Endothelial cell of umbilical vein (primary cell): ENCODE measurements at regions of chr5 and their contacts with region 1.

Region 1: GRCh38 chr5:149035372-149035790 is 27.5 kb downstream of the SH3TC2 start:
- DNase-seq: peak; percentile 73
- H3K4me3 ChIP-seq: no peak overlapping the region
- H3K27ac ChIP-seq: no peak overlapping the region
- H3K4me1 ChIP-seq: peaks cover 39% of the 10 kb centered on the region
- H3K27me3 ChIP-seq: no peaks in the 10 kb centered on the region
- CTCF ChIP-seq: peak; percentile 87 to 88
- POLR2A ChIP-seq: no peak

Region 2: GRCh38 chr5:148740966-148741742 is 294.2 kb before region 1 on chr5:
- CTCF ChIA-PET with region 1: interaction called, 176 read pairs
- POLR2A ChIA-PET with region 1: no interaction called
- dilution Hi-C with region 1: no loop called
- intact Hi-C with region 1: loop called (anchors 1 kb)
- DNase-seq: peak; percentile 82
- H3K4me3 ChIP-seq: no peak overlapping the region
- H3K27ac ChIP-seq: no peak overlapping the region
- H3K4me1 ChIP-seq: no peaks in the 10 kb centered on the region
- H3K27me3 ChIP-seq: no peaks in the 10 kb centered on the region
- CTCF ChIP-seq: peak; percentile 49
- POLR2A ChIP-seq: no peak

Region 3: GRCh38 chr5:148820461-148821395 is 214.7 kb before region 1 on chr5:
- CTCF ChIA-PET with region 1: interaction called, 30 read pairs
- POLR2A ChIA-PET with region 1: no interaction called
- dilution Hi-C with region 1: no loop called
- intact Hi-C with region 1: loop called (anchors 1 kb)
- DNase-seq: peak; percentile 45
- H3K4me3 ChIP-seq: no peak overlapping the region
- H3K27ac ChIP-seq: no peak overlapping the region
- H3K4me1 ChIP-seq: peaks cover 6% of the 10 kb centered on the region
- H3K27me3 ChIP-seq: no peaks in the 10 kb centered on the region
- CTCF ChIP-seq: peak; percentile 57 to 68
- POLR2A ChIP-seq: no peak

Region 4: DNA sequence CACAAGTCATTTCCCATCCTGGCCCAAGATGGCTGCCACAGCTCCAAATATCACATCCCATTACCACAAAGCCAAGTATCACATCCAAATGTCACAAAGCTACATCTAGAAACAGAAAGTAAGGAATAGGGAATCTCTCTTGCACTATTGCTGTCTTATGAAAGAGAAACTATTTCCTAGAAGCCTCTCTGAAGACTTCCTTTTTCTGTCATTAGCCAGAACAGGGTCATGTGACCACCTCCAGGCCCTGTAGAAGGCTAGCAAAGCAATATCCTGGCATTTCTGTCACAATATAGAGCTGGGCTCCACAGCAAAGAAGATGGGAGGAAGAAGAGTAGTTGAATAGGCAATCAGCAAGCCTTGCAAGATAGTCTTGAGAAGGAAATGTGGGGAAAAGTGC is 71.7 kb before region 1 on chr5:
- CTCF ChIA-PET with region 1: interaction called, 64 read pairs
- POLR2A ChIA-PET with region 1: no interaction called
- dilution Hi-C with region 1: no loop called
- intact Hi-C with region 1: loop called (anchors 2 kb)
- DNase-seq: no peak
- H3K4me3 ChIP-seq: no peak overlapping the region
- H3K27ac ChIP-seq: no peak overlapping the region
- H3K4me1 ChIP-seq: peaks cover 16% of the 10 kb centered on the region
- H3K27me3 ChIP-seq: no peaks in the 10 kb centered on the region
- CTCF ChIP-seq: no peak
- POLR2A ChIP-seq: no peak

Region 5: DNA sequence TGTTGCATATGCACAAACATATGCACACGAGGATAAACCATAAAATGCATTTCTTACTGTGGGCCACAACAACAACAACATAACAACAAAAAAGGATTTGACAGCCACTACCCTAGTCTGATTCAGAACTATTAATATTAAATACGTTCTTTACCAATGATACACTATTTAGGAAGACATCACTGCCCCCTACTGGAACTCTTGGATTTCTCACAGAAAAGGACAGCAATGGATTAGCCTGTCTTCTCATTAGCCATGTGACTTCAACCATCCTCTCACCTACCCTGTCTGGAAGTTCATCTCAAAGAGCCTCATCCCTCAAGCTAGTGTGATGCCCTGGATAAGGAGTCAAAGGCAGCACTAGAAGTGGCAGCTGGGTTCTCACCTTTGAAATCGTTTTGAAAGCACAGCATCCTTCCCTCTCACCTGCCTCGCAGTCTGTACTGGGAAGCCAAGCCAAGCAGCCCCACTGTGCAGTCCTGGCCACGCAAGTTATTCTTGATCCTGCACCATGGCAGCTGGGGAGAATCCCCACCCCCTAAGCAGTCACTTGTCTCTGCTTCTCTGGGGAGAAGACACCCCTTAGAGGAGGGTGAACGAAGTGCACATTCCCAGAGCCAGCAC is 37.1 kb before region 1 on chr5:
- CTCF ChIA-PET with region 1: interaction called, 69 read pairs
- POLR2A ChIA-PET with region 1: no interaction called
- dilution Hi-C with region 1: no loop called
- intact Hi-C with region 1: loop called (anchors 1 kb)
- DNase-seq: peak; percentile 68
- H3K4me3 ChIP-seq: no peak overlapping the region
- H3K27ac ChIP-seq: no peak overlapping the region
- H3K4me1 ChIP-seq: peaks cover 13% of the 10 kb centered on the region
- H3K27me3 ChIP-seq: no peaks in the 10 kb centered on the region
- CTCF ChIP-seq: peak; percentile 54 to 62
- POLR2A ChIP-seq: no peak

Region 6: GRCh38 chr5:149024477-149024876 is 10.9 kb before region 1 on chr5:
- CTCF ChIA-PET with region 1: interaction called, 22 read pairs
- POLR2A ChIA-PET with region 1: no interaction called
- dilution Hi-C with region 1: no loop called
- intact Hi-C with region 1: no loop called
- DNase-seq: peak; percentile 39
- H3K4me3 ChIP-seq: no peak overlapping the region
- H3K27ac ChIP-seq: no peak overlapping the region
- H3K4me1 ChIP-seq: peaks cover 6% of the 10 kb centered on the region
- H3K27me3 ChIP-seq: no peaks in the 10 kb centered on the region
- CTCF ChIP-seq: no peak
- POLR2A ChIP-seq: no peak